HEK293 (cell line): ENCODE measurements at regions of chr19 and their contacts with region 1.

Region 1: DNA sequence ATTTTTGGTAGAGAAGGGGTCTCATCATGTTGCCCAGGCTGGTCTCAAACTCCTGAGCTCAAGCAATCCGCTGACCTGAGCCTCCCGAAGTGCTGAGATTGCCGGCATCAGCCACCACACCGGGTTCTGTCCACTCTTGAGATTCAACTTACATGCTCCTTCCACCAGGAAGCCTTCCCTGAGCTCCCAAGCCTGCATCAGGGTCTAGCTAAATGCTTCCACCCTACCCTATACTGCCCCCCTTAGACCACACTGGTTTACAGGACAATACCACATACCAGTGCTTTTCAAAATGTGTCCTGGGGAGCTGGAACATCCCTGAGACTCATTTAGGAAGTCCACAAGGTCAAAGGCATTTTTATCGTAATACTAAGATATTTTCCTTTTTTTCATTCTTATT is 15.1 kb upstream of the CACNG8 start:
- H3K4me3 ChIP-seq: no peak overlapping the region
- H3K27ac ChIP-seq: no peak overlapping the region
- H3K4me1 ChIP-seq: no peaks in the 10 kb centered on the region
- CTCF ChIP-seq: no peak

Region 2: GRCh38 chr19:53849237-53849676 is 98.4 kb before region 1 on chr19:
- CTCF ChIA-PET with region 1: interaction called, 18 read pairs
- POLR2A ChIA-PET with region 1: no interaction called
- H3K4me3 ChIP-seq: no peak overlapping the region
- H3K27ac ChIP-seq: no peak overlapping the region
- H3K4me1 ChIP-seq: no peaks in the 10 kb centered on the region
- CTCF ChIP-seq: no peak

Region 3: DNA sequence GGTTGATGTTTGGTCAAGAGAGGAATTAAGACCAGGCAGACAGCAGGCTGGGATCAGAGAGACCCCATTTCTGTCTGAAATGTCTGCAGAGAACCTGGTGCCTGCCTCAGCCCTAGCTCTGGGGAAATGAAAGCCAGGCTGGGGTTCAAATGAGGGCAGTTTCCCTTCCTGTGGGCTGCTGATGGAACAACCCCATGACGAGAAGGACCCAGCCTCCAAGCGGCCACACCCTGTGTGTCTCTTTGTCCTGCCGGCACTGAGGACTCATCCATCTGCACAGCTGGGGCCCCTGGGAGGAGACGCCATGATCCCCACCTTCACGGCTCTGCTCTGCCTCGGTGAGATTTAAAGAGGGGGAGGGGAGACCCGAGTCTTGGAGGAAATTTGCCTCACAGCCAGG is 715.1 kb after region 1 on chr19 and contains the start of gene LILRB4:
- CTCF ChIA-PET with region 1: no interaction called
- POLR2A ChIA-PET with region 1: no interaction called
- H3K4me3 ChIP-seq: no peak within 1 kb of the TSS
- H3K27ac ChIP-seq: no peak within 1 kb of the TSS
- H3K4me1 ChIP-seq: no peaks in the 10 kb centered on the region
- CTCF ChIP-seq: no peak